ENCODE measurements at regions of chr1 and their contacts with region 1.

Region 1: DNA sequence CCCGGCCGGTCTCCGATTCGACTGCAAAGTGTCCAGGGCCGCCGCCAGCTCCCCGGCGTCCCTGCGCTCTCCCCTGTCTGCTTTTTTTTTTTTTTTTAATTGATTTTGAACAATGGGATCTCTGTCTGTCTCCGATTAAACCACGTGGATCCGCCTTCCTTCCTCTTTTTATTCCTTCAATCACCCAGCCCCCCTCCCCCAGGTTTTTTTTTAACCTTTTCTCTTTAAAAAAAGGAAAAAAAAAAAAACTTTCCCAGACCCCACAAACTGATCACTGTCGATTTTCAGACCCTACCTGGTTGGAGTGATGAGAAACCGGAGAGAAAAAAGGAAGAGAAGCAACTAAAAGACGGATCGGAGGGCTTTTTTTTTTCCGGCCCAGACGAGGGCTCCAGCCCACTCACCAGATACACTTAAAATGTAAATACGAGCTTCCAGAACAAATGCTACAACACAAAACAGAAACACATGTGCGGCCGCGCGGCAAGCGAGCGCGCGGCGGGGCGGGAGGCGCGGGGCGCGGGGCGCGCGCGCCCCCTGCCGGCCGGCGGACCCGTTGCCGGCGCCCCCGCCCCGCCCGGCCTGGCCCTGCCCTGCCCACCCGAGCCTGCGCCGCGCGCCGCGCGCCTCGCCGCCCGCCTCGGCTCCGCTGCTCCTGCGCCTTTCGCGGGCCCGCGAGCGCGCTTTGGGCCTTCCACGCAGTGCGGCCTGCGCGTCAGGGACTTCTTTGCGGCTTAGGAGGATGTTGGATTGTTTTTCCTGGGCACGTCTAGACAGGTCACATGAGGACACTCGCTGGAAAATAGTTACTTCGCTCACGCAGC is at the start of gene RCC2:
- DNase-seq: peak; percentile 63
- ATAC-seq: peak; percentile 70
- H3K4me3 ChIP-seq: peak within 1 kb of the TSS; percentile 99
- H3K27ac ChIP-seq: peak within 1 kb of the TSS; percentile 90
- H3K4me1 ChIP-seq: peaks cover 43% of the 10 kb centered on the region
- H3K27me3 ChIP-seq: no peaks in the 10 kb centered on the region
- CTCF ChIP-seq: no peak
- total RNA-seq, gene RCC2: 82.7 and 95.2 TPM in 2 replicates

Region 2: DNA sequence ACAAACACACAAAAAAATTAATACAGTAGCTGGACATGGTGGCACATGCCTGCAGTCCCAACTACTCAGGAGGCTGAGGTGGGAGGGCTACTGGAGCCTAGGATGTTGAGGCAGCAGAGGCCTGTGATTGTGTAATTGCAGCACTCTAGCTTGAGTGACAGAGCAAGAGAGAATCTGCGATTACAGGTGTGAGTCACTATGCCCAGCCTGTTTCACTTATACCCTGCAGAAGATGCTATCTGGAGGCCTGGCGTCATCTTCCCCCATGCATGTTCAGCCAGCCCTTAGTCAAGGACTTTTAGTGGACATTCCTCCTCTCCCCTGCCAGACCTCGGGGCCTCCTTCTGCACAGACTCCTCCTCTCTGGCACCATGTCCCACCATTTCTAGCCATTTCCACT is 36.3 kb after region 1 on chr1:
- CTCF ChIA-PET with region 1: interaction called, 3 read pairs
- POLR2A ChIA-PET with region 1: no interaction called
- intact Hi-C with region 1: loop called (anchors 5 kb)
- DNase-seq: peak; percentile 87
- ATAC-seq: peak; percentile 90
- H3K4me3 ChIP-seq: no peak overlapping the region
- H3K27ac ChIP-seq: peak overlapping the region; percentile 54
- H3K4me1 ChIP-seq: peaks cover 9% of the 10 kb centered on the region; the same call in 1 of the 2 replicates
- H3K27me3 ChIP-seq: no peaks in the 10 kb centered on the region
- CTCF ChIP-seq: no peak

Region 3: GRCh38 chr1:17569200-17570161 is 130.0 kb after region 1 on chr1:
- CTCF ChIA-PET with region 1: no interaction called
- POLR2A ChIA-PET with region 1: no interaction called
- intact Hi-C with region 1: loop called (anchors 5 kb)
- DNase-seq: peak; percentile 86
- ATAC-seq: peak; percentile 76
- H3K4me3 ChIP-seq: no peak overlapping the region
- H3K27ac ChIP-seq: peak overlapping the region; percentile 97
- H3K4me1 ChIP-seq: peaks cover 19% of the 10 kb centered on the region
- H3K27me3 ChIP-seq: no peaks in the 10 kb centered on the region
- CTCF ChIP-seq: no peak

Measured in PC-3 (cell line).